Psoas muscle (tissue), 8 donors: ENCODE measurements at regions of chr6 and their contacts with region 1.

Region 1: DNA sequence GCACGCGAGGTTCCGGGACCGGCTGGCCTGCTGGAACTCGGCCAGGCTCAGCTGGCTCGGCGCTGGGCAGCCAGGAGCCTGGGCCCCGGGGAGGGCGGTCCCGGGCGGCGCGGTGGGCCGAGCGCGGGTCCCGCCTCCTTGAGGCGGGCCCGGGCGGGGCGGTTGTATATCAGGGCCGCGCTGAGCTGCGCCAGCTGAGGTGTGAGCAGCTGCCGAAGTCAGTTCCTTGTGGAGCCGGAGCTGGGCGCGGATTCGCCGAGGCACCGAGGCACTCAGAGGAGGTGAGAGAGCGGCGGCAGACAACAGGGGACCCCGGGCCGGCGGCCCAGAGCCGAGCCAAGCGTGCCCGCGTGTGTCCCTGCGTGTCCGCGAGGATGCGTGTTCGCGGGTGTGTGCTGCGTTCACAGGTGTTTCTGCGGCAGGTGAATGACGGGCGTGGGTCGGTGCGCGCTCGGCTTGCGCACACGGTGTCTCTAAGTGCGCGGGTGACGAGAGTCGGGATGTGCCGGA is at the start of gene CDKN1A:
- DNase-seq: peak; percentile 93 to 96
- ATAC-seq: peak; percentile 72 to 80 (median 76)
- H3K4me3 ChIP-seq: peak within 1 kb of the TSS; percentile 91
- H3K27ac ChIP-seq: peak within 1 kb of the TSS; percentile 99
- H3K4me1 ChIP-seq: peaks cover 38% of the 10 kb centered on the region
- H3K27me3 ChIP-seq: no peaks in the 10 kb centered on the region
- CTCF ChIP-seq: no peak
- total RNA-seq, gene CDKN1A: 39.2 to 666 (median 157) TPM

Region 2: DNA sequence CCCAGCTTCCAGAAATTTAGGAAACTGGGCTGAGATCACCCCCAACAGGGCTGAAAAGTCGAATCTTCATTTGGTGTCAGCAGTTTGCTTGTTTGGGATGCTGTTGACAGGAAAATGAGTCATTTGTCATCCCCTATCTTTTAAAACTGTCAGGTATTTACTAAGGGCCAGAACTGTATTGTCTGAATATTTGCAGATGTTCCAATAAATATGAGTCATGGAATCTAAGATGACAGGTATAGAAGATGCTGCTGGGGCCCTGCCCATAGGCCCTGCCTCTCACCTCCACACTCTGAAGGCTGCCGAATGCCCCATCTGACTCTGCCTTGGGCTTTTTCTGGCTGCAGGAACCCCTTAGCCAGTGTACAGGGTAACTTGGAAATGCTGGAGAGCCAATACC is 295.0 kb before region 1 on chr6:
- intact Hi-C with region 1: no loop called
- DNase-seq: no peak
- ATAC-seq: no peak
- H3K4me3 ChIP-seq: no peak overlapping the region
- H3K27ac ChIP-seq: no peak overlapping the region
- H3K4me1 ChIP-seq: peaks cover 13% of the 10 kb centered on the region
- H3K27me3 ChIP-seq: peaks cover 0 to 26% (median 9%) of the 10 kb centered on the region in 3 donors
- CTCF ChIP-seq: no peak

Region 3: DNA sequence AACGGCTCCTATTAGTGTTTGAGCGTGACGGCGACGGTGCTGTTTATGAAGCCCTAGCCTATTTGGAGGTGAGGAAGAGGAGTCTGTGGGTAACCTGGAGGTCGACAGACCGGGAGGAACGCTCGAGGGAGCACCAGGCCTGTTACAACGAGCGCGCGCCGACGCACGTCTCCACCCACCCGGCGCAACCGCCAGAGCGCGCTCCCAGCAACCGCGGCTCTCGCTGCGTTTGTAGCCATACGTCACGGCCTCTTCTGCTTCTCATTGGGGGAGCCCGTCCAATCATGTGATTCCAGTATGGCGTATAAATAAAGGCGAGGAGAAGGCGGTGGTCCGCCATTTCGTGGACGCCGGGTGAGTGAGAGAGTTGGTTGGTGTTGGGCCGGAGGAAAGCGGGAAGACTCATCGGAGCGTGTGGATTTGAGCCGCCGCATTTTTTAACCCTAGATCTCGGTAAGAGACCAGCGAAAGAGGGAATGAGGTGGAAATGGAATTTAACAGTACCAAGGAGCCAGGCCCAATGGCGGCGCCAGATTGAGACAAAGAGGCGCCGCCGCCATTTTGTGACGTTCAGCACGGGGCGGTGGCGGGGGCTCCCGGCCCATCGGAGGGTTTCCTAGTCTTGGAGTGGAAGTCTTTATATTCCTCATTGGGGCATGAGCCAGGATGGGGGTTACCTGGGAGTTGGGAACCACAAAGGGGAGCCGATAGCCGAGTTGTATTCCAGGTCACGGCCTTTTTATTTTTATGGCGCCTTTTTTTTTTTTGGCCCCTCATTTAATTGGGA is 84.4 kb before region 1 on chr6 and contains the start of gene SRSF3:
- intact Hi-C with region 1: no loop called
- DNase-seq: peak; percentile 96 to 98
- ATAC-seq: peak; percentile 95 to 98 (median 98)
- H3K4me3 ChIP-seq: peak within 1 kb of the TSS; percentile 86
- H3K27ac ChIP-seq: peak within 1 kb of the TSS; percentile 96
- H3K4me1 ChIP-seq: peaks cover 32% of the 10 kb centered on the region
- H3K27me3 ChIP-seq: no peaks in the 10 kb centered on the region
- CTCF ChIP-seq: peak; percentile 51
- total RNA-seq, gene SRSF3: 64.6 to 182 (median 125) TPM

Region 4: GRCh38 chr6:36623547-36624459 is 54.8 kb before region 1 on chr6:
- intact Hi-C with region 1: loop called (anchors 2 to 5 kb)
- DNase-seq: peak; percentile 85 to 90
- ATAC-seq: peak; percentile 75 to 88 (median 85)
- H3K4me3 ChIP-seq: no peak overlapping the region
- H3K27ac ChIP-seq: no peak overlapping the region
- H3K4me1 ChIP-seq: peaks cover 16% of the 10 kb centered on the region
- H3K27me3 ChIP-seq: no peaks in the 10 kb centered on the region
- CTCF ChIP-seq: peak; percentile 80

Region 5: DNA sequence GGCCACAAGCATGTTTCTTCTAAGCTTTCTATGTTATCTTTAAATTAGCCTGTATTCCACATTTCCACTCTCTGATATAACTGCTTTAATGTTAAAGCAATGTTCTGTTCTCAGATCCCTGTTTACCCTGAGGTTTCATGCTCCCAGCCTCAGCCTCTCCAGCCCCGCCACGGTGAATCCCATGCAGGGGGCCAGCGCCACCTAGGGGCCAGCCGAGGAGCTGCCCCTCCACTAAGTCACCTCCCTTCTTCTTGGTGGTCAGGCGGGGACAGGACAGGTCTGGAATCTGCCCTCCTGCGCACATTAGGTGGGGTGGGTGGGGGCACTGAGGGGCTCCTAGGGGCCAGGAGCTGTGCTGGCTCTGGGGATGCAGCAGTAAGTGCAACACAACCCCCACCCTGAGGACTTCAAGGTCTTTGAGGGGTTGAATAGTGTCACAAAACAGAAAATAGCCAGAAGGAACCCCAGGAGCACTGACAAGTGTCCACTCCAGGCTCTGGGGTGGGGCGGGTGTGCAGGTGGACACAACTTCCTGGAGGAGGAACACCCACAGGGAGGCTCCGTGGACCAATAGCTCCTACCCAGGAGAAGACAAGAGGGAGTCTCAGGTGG is 80.7 kb after region 1 on chr6:
- intact Hi-C with region 1: loop called in 1 of 2 experiments (anchors 5 kb)
- DNase-seq: peak; percentile 79 to 91
- ATAC-seq: peak; percentile 88 to 98 (median 95)
- H3K4me3 ChIP-seq: no peak overlapping the region
- H3K27ac ChIP-seq: no peak overlapping the region
- H3K4me1 ChIP-seq: peaks cover 5% of the 10 kb centered on the region
- H3K27me3 ChIP-seq: no peaks in the 10 kb centered on the region
- CTCF ChIP-seq: peak; percentile 95

Region 6: DNA sequence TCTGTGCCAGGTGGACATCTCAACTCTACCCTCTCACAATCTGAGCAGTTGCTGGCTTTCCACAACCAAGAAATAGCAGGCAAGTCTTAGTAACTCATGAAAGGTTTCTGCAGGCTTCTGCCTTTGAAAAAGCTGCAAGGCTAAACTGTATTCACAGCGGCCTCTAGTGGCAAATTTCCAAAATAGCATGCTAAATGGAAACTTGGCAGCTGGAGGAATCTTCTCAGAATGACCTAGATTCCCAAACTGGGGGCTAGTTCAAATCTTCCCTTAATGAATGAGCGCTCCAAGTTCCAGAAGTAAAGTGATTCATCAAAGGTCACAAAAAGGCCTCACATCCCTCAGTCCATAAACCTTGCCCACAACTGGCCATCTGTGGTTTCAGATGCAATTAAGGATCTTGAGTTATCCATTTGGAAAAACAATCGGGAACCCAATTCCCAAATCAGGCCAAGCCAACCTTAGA is 172.6 kb after region 1 on chr6:
- intact Hi-C with region 1: loop called in 1 of 2 experiments (anchors 5 kb)
- DNase-seq: no peak
- ATAC-seq: peak; percentile 5 to 59 (median 47)
- H3K4me3 ChIP-seq: no peak overlapping the region
- H3K27ac ChIP-seq: peak overlapping the region; percentile 94
- H3K4me1 ChIP-seq: peaks cover 36% of the 10 kb centered on the region
- H3K27me3 ChIP-seq: no peaks in the 10 kb centered on the region
- CTCF ChIP-seq: peak; percentile 77